Posterior vena cava (tissue), 2 donors: ENCODE measurements at regions of chr10 and their contacts with region 1.

Region 1: DNA sequence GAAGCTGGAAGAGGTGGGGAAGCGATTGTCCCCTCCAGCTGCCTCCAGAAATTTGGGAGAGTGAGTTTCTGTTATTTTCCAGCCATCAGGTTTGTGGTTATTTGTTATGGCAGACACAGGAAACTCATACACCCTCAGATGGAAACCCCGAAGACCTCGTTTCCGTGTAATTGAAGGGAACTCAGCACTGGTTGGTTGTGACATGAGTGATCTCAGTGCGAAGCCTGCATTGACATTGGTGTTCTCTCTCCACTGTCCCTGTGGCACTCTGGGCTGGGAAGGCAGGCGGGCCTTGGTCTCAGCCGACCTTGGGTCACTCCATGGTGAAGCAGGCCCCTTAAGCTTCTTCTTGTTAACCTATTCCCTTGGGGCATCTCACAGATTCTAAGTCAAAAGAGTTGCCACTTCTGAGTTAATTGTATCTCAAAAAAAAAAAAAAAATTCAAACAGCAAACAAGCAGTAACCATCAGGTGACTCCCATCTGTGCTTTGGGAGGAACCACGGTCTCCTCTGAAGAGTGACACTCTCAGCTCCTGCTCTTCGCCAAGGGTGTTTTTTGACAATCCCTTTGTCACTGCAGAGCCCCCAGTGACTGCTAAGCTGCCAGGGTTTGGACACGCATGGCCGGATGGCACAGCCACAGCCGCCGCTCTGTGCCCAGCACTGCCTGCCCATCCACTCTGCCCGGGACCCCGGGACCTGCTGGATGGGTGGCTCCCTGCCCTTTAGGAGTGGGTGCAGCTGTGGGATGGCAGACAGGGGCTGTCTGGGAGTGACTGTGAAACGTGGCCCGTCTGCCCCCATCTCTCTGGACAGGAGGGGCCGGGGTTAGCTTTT is 233.6 kb downstream of the PRPF18 start:
- DNase-seq: no peak

Region 2: GRCh38 chr10:13882112-13882711 is 61.9 kb after region 1 on chr10:
- intact Hi-C with region 1: loop called in 1 of 2 experiments (anchors 10 kb)
- DNase-seq: no peak

Region 3: GRCh38 chr10:15278786-15279185 is 1458.4 kb after region 1 on chr10:
- intact Hi-C with region 1: no loop called
- DNase-seq: no peak